Adrenal gland (tissue), 19 donors: ENCODE measurements at regions of chr1 and their contacts with region 1.

Region 1: GRCh38 chr1:33007190-33008050 is 29.3 kb downstream of the AK2 start:
- DNase-seq: peak; percentile 47 to 86 (median 78)
- H3K4me3 ChIP-seq: no peak overlapping the region
- H3K27ac ChIP-seq: peak overlapping the region in 2 of 5 donors; percentile 13 to 58
- H3K4me1 ChIP-seq: peaks cover 33 to 54% of the 10 kb centered on the region in 2 donors
- H3K27me3 ChIP-seq: no peaks in the 10 kb centered on the region
- CTCF ChIP-seq: peak; percentile 16 to 69 (median 61)
- POLR2A ChIP-seq: no peak

Region 2: GRCh38 chr1:32753532-32754312 is 253.7 kb before region 1 on chr1:
- intact Hi-C with region 1: no loop called
- DNase-seq: peak; percentile 72 to 88 (median 80)
- H3K4me3 ChIP-seq: peak overlapping the region in 3 of 4 donors; percentile 13 to 98 (median 60)
- H3K27ac ChIP-seq: peak overlapping the region; percentile 2 to 99 (median 92)
- H3K4me1 ChIP-seq: peaks cover 35 to 43% of the 10 kb centered on the region in 2 donors
- H3K27me3 ChIP-seq: no peaks in the 10 kb centered on the region
- CTCF ChIP-seq: peak in 1 of 6 experiments; percentile 3
- POLR2A ChIP-seq: peak; percentile 43 to 75

Region 3: GRCh38 chr1:32786856-32787255 is 220.6 kb before region 1 on chr1:
- intact Hi-C with region 1: no loop called
- DNase-seq: no peak
- H3K4me3 ChIP-seq: no peak overlapping the region
- H3K27ac ChIP-seq: peak overlapping the region in 1 of 5 donors; percentile 9
- H3K4me1 ChIP-seq: peaks cover 9 to 10% of the 10 kb centered on the region in 2 donors
- H3K27me3 ChIP-seq: no peaks in the 10 kb centered on the region
- CTCF ChIP-seq: peak; percentile 24 to 55 (median 50)
- POLR2A ChIP-seq: no peak

Region 4: DNA sequence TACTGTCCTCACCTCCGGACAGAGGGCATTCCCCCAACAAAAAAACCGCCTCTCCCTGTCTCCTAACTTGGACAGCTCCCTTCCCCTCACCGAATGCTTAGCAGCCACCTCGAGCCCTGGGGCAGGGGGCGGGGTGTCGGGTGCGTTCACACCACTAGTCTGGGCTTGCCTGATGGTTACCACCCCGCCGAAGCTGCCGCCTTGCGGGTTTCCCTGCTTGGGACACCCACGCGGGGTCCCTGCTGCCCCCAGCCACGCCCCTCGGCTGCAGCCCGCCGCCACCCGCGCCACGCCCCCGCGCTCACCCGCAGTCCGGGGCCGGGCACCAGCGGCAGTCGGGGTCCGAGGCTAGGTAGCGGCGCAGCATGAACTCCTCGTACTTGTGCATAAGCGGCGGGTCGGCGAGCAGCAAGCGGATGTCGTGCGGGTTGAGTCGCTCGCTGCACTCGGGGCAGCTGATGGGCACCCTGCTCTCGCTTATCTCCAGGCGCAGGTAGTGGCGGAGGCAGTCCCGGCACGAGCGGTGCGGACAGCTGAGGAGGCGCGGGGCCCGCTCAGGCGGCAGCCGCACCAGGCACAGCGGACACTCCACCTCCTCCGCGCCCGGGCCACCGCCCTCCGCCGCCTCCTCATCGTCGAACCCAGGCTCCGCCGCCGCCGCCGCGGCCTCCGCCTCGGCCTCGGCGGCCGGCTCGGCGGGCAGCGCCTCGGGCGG is 43.5 kb before region 1 on chr1:
- intact Hi-C with region 1: loop called in 1 of 2 experiments (anchors 2 kb)
- DNase-seq: peak; percentile 60 to 75 (median 71)
- H3K4me3 ChIP-seq: peak overlapping the region; percentile 76 to 95 (median 90)
- H3K27ac ChIP-seq: peak overlapping the region; percentile 46 to 94 (median 79)
- H3K4me1 ChIP-seq: peaks cover 15 to 38% of the 10 kb centered on the region in 2 donors
- H3K27me3 ChIP-seq: no peaks in the 10 kb centered on the region
- CTCF ChIP-seq: peak in 2 of 6 experiments; percentile 1 to 14
- POLR2A ChIP-seq: peak in 1 of 2 donors; percentile 13

Region 5: DNA sequence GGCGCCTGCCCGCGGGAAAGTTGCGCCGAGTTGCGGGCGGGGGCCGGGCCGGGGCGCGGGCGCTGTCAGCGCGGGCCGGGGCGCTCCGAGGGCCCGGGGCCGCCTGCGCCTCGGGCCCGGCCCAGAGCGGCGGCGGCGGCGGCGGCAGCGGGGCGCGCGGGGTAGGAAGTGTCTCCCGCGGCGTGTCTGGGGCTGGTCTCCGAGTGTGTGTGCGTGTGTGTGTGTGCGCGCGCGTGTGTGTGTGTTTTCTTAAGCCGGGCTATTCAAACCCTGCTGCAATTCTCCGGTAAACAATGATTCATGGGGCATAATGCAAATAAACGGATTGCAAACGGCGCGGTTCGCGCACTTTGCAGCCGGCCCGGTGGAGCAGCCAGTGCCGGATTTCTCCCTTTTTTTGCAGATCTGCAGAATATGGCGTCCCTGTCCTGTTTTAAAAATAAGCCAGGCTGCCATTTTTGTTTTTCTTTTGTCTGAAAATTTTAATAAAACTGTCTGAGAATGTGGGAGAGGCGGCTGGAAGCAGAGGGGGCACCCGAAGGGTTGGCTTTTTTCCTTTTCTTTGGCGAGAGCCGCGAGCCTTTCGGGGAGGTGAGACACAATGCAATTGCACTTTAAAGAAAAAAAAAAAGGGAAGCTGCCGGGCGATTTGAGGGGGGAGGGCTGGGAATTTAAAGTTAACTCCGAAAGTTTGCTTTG is 249.4 kb after region 1 on chr1:
- intact Hi-C with region 1: no loop called
- DNase-seq: peak; percentile 55 to 72 (median 62)
- H3K4me3 ChIP-seq: peak overlapping the region; percentile 10 to 80 (median 54)
- H3K27ac ChIP-seq: peak overlapping the region; percentile 23 to 99 (median 78)
- H3K4me1 ChIP-seq: peaks cover 23 to 46% of the 10 kb centered on the region in 2 donors
- H3K27me3 ChIP-seq: no peaks in the 10 kb centered on the region
- CTCF ChIP-seq: no peak
- POLR2A ChIP-seq: no peak

Region 6: GRCh38 chr1:33384040-33384812 is 376.8 kb after region 1 on chr1:
- intact Hi-C with region 1: no loop called
- DNase-seq: peak; percentile 29 to 70 (median 61)
- H3K4me3 ChIP-seq: no peak overlapping the region
- H3K27ac ChIP-seq: peak overlapping the region in 3 of 5 donors; percentile 49 to 67 (median 56)
- H3K4me1 ChIP-seq: peaks cover 30 to 72% of the 10 kb centered on the region in 2 donors
- H3K27me3 ChIP-seq: no peaks in the 10 kb centered on the region
- CTCF ChIP-seq: no peak
- POLR2A ChIP-seq: no peak